OCI-LY7 (cell line): ENCODE measurements at regions of chr3 and their contacts with region 1.

Region 1: GRCh38 chr3:114213627-114214541 is 23.5 kb downstream of the ZNF80 start:
- DNase-seq: peak; percentile 93
- H3K4me3 ChIP-seq: peak overlapping the region; percentile 69
- H3K27ac ChIP-seq: peak overlapping the region; percentile 99
- H3K4me1 ChIP-seq: peaks cover 54% of the 10 kb centered on the region
- CTCF ChIP-seq: peak; percentile 70

Region 2: DNA sequence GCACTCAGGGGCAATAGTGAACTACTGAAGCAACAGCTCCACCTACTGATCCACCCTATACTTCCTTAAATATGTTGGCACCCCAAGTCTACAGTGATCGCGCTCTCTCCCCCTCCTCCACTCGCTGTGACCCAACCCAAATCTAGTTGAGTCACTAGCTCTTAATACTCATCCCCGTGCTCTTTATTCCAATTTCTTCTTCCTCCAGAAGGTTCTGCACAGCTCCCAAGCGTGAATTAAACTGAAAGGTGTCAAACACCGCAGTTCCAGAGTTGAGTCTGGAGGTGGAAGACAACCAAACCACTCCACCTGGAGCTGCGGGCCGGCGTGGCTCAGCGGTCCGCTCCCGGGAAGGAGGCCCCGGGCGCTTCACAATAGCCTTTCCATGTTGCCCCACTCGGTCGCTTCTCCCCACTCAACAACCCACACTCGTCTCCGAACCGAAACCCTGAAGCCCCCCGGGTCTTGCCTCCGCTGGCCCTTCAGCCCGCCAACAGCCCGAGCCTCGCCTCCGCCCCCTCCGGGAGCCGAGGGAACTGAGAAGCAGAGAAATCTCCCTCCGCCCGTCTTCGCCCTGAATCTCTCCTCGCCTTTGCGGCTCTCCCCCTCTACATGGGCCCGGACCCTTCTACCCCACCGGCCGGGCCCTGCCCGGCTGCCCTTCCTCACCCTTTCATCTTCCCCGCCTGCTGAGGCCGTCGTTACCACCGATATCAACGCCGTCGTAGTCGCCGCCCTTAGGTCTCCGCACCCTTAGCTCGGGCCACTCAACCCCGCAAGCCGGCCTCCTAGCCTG is 468.4 kb before region 1 on chr3:
- CTCF ChIA-PET with region 1: interaction called, 3 read pairs
- POLR2A ChIA-PET with region 1: interaction called, 4 read pairs
- intact Hi-C with region 1: loop called (anchors 1 kb)
- DNase-seq: peak; percentile 88
- H3K4me3 ChIP-seq: peak overlapping the region; percentile 83
- H3K27ac ChIP-seq: peak overlapping the region; percentile 95
- H3K4me1 ChIP-seq: peaks cover 56% of the 10 kb centered on the region
- CTCF ChIP-seq: peak; percentile 85

Region 3: GRCh38 chr3:114005481-114005880 is 208.4 kb before region 1 on chr3:
- CTCF ChIA-PET with region 1: no interaction called
- POLR2A ChIA-PET with region 1: interaction called, 5 read pairs
- intact Hi-C with region 1: loop called (anchors 5 kb)
- DNase-seq: peak; percentile 97
- H3K4me3 ChIP-seq: peak overlapping the region; percentile 59
- H3K27ac ChIP-seq: peak overlapping the region; percentile 97
- H3K4me1 ChIP-seq: peaks cover 74% of the 10 kb centered on the region
- CTCF ChIP-seq: peak; percentile 67

Region 4: DNA sequence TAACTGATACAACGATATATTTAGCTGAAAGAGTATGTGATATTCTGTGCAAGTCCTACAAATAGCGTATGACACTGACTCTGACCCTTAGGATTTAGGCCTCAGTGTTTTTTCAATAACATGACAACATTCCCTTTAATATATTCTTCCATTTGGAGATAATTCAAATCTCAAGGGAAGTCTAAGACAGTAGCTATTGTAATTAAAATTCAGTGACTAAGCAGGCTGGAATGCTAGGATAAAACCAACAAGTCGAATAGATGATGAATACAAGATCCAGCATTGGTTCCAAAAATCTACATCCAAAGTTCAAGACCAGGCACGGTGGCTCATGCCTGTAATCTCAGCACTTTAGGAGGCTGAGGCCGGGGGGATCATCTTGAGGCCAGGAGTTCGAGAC is 101.2 kb before region 1 on chr3:
- CTCF ChIA-PET with region 1: no interaction called
- POLR2A ChIA-PET with region 1: no interaction called
- intact Hi-C with region 1: no loop called
- DNase-seq: no peak
- H3K4me3 ChIP-seq: no peak overlapping the region
- H3K27ac ChIP-seq: no peak overlapping the region
- H3K4me1 ChIP-seq: no peaks in the 10 kb centered on the region
- CTCF ChIP-seq: no peak

Region 5: GRCh38 chr3:114152519-114153151 is 61.2 kb before region 1 on chr3:
- CTCF ChIA-PET with region 1: no interaction called
- POLR2A ChIA-PET with region 1: interaction called, 6 read pairs
- intact Hi-C with region 1: loop called (anchors 2 kb)
- DNase-seq: peak; percentile 82
- H3K4me3 ChIP-seq: peak overlapping the region; percentile 23
- H3K27ac ChIP-seq: no peak overlapping the region
- H3K4me1 ChIP-seq: peaks cover 6% of the 10 kb centered on the region
- CTCF ChIP-seq: peak; percentile 97

Region 6: GRCh38 chr3:114336122-114336697 is 122.3 kb after region 1 on chr3:
- CTCF ChIA-PET with region 1: no interaction called
- POLR2A ChIA-PET with region 1: interaction called, 10 read pairs
- intact Hi-C with region 1: loop called (anchors 2 kb)
- DNase-seq: peak; percentile 9
- H3K4me3 ChIP-seq: no peak overlapping the region
- H3K27ac ChIP-seq: no peak overlapping the region
- H3K4me1 ChIP-seq: peaks cover 10% of the 10 kb centered on the region
- CTCF ChIP-seq: peak; percentile 81

Region 7: GRCh38 chr3:115147329-115148141 is 933.7 kb after region 1 on chr3:
- CTCF ChIA-PET with region 1: no interaction called
- POLR2A ChIA-PET with region 1: no interaction called
- intact Hi-C with region 1: loop called (anchors 5 kb)
- DNase-seq: peak; percentile 99
- H3K4me3 ChIP-seq: peak overlapping the region; percentile 91
- H3K27ac ChIP-seq: peak overlapping the region; percentile 64
- H3K4me1 ChIP-seq: peaks cover 17% of the 10 kb centered on the region
- CTCF ChIP-seq: no peak